ENCODE measurements at regions of chr12 and their contacts with region 1.

Region 1: GRCh38 chr12:128797119-128798118 is 26.3 kb downstream of the SLC15A4 start:
- DNase-seq: peak; percentile 67
- H3K4me3 ChIP-seq: no peak overlapping the region
- H3K27ac ChIP-seq: peak overlapping the region; percentile 42
- H3K4me1 ChIP-seq: peaks cover 62% of the 10 kb centered on the region
- H3K27me3 ChIP-seq: no peaks in the 10 kb centered on the region
- CTCF ChIP-seq: no peak
- POLR2A ChIP-seq: no peak

Region 2: GRCh38 chr12:128783129-128783574 is 14.3 kb before region 1 on chr12:
- CTCF ChIA-PET with region 1: interaction called, 26 read pairs
- POLR2A ChIA-PET with region 1: no interaction called
- dilution Hi-C with region 1: no loop called
- intact Hi-C with region 1: loop called (anchors 2 kb)
- DNase-seq: no peak
- H3K4me3 ChIP-seq: no peak overlapping the region
- H3K27ac ChIP-seq: no peak overlapping the region
- H3K4me1 ChIP-seq: no peaks in the 10 kb centered on the region
- H3K27me3 ChIP-seq: no peaks in the 10 kb centered on the region
- CTCF ChIP-seq: no peak
- POLR2A ChIP-seq: no peak

Region 3: DNA sequence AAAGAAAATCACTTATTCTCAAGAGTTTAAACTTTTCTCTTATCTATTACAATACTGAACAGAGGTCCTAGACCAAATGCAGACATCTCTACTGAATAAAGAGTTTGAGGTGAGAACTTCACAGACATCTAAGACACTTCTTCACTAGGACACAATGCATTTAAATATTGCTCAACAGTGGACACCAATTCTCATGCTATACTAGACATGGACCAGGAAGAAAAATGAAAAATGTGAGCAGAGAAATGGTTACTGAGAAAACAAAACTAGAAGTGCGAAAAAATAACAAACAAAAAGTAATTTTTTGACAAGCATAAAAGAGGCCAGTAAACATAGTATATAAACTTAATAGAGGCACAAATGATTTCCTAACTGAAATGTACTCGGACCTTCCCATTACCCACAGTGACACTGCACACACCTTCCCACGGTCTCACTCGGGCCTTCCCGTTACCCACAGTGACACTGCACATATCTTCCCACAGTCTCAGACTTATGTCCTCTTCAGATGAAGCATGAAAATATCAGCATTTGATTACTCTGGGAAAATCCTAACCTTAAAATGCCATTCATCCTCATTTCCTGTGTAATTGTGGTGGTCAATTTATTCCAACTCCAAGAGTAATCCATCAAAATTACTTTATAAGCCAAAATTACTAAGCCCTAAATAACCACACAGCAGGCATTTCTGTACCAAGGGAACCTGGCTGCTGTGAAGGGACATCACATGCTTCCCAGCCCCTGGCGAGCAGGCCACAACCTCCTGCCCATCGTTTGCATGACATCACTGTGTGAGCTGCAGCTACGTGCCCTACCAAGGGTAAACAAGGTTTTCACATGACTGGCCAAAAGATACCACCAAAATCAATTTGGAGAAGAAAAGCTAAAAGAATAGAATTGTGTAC is 19.9 kb after region 1 on chr12:
- CTCF ChIA-PET with region 1: interaction called, 11 read pairs
- POLR2A ChIA-PET with region 1: interaction called, 3 read pairs
- dilution Hi-C with region 1: no loop called
- intact Hi-C with region 1: loop called (anchors 1 kb)
- DNase-seq: no peak
- H3K4me3 ChIP-seq: no peak overlapping the region
- H3K27ac ChIP-seq: no peak overlapping the region
- H3K4me1 ChIP-seq: peaks cover 3% of the 10 kb centered on the region
- H3K27me3 ChIP-seq: no peaks in the 10 kb centered on the region
- CTCF ChIP-seq: no peak
- POLR2A ChIP-seq: no peak

Region 4: DNA sequence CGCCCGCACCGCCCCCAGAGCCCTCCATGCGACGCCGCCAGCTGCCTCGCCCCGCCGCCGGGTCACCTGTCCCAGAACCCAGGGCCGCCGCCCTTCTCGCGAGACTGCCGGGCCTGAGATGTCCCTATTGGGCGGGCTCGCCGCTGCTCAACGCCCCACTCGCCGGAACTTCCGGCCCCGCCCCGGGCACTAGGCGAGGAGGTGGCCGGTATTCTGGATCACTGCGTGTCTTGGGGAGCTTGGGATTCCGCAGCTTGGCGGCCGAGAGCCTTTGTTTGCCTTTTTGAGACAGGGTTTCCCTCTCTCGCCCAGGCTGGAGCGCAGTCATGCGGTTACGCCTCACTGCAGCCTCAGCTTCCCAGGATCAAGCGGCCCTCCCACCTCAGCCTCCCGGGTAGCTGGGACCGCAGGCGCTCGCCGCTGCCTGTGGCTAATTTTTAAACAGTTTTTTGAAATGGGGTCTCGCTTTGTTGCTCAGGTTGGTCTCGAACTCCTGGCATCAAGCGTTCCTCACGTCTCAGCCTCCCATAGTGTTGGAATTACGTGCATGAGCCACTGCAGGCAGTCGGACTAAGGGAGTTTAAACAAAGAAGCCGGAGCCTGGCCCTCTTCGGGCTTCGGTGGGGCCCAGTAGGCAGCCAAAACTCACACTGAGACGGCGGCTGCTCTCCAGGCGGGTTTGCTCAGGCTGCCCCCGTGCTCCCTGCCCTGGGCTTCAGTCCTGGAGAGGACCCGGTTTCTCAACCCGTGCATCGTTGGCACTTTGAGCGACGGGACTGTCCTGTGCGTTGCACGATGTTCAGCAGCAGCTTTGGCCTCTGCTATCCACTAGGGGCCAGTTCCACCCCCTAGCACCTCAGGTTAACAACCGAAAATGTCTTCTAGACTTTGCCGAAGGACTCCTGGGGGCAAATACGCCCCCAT is 26.8 kb after region 1 on chr12 and contains the start of gene SLC15A4:
- CTCF ChIA-PET with region 1: interaction called, 11 read pairs
- POLR2A ChIA-PET with region 1: interaction called, 3 read pairs
- dilution Hi-C with region 1: no loop called
- intact Hi-C with region 1: loop called (anchors 1 kb)
- DNase-seq: peak; percentile 85
- H3K4me3 ChIP-seq: peak within 1 kb of the TSS; percentile 67 to 90 (median 67)
- H3K27ac ChIP-seq: peak within 1 kb of the TSS; percentile 55
- H3K4me1 ChIP-seq: peaks cover 2% of the 10 kb centered on the region
- H3K27me3 ChIP-seq: no peaks in the 10 kb centered on the region
- CTCF ChIP-seq: peak in 1 of 2 donors; percentile 7
- POLR2A ChIP-seq: peak; percentile 94
- total RNA-seq, gene SLC15A4: 24.5 and 24.6 TPM in 2 replicates

Region 5: GRCh38 chr12:130053651-130054069 is 1256.2 kb after region 1 on chr12:
- CTCF ChIA-PET with region 1: no interaction called
- POLR2A ChIA-PET with region 1: no interaction called
- dilution Hi-C with region 1: no loop called
- intact Hi-C with region 1: no loop called
- DNase-seq: no peak
- H3K4me3 ChIP-seq: no peak overlapping the region
- H3K27ac ChIP-seq: no peak overlapping the region
- H3K4me1 ChIP-seq: no peaks in the 10 kb centered on the region
- H3K27me3 ChIP-seq: no peaks in the 10 kb centered on the region
- CTCF ChIP-seq: no peak
- POLR2A ChIP-seq: no peak